Panc1 (cell line): ENCODE measurements at regions of chr1 and their contacts with region 1.

Region 1: GRCh38 chr1:218705911-218706893 is 361.1 kb downstream of the TGFB2 start:
- DNase-seq: peak; percentile 96
- ATAC-seq: peak; percentile 94
- H3K4me3 ChIP-seq: no peak overlapping the region
- H3K27ac ChIP-seq: peak overlapping the region; percentile 87
- H3K4me1 ChIP-seq: peaks cover 16% of the 10 kb centered on the region
- H3K27me3 ChIP-seq: no peaks in the 10 kb centered on the region
- CTCF ChIP-seq: no peak

Region 2: GRCh38 chr1:218948446-218948845 is 242.2 kb after region 1 on chr1:
- CTCF ChIA-PET with region 1: interaction called, 15 read pairs
- POLR2A ChIA-PET with region 1: no interaction called
- in situ Hi-C with region 1: no loop called
- intact Hi-C with region 1: no loop called
- DNase-seq: no peak
- ATAC-seq: no peak
- H3K4me3 ChIP-seq: no peak overlapping the region
- H3K27ac ChIP-seq: no peak overlapping the region
- H3K4me1 ChIP-seq: no peaks in the 10 kb centered on the region
- H3K27me3 ChIP-seq: no peaks in the 10 kb centered on the region
- CTCF ChIP-seq: no peak